Activated naive CD4-positive, alpha-beta T cell treated with anti-CD3 and anti-CD28 coated beads for 36 hours (primary cell): ENCODE measurements at regions of chr13 and their contacts with region 1.

Region 1: DNA sequence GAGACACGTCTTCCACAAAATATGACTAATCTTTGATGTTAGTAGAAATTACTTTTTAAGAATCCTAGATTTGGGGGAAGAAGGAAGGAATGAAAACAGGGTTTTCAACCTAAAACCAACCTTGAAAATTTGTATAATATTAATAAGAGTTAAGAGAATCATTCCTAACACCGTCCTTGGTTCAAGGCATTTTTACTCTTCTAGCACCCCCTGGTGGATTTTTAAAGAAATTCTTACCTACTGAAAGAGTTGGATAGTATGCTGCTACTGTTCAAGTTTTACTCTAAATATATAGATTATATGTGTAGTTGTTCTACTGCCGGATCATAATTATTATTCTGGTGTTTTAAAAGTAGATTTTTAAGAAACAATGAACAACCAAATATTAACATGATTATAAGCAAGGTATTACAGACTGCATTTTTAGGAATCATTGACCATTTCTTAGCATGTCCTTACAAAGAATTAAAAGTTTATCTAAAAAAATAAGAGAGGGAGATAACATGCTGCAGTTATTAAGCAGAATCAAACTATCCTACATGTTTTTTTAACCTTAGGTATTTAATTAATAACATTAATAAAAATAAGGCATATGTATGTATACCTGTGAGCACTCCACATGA is 7.4 kb upstream of the SLITRK6 start:
- DNase-seq: no peak
- H3K4me3 Mint-ChIP-seq: no peak overlapping the region
- H3K27ac Mint-ChIP-seq: no peak overlapping the region
- H3K4me1 Mint-ChIP-seq: no peaks in the 10 kb centered on the region
- H3K27me3 Mint-ChIP-seq: no peaks in the 10 kb centered on the region

Region 2: GRCh38 chr13:84844473-84844872 is 962.2 kb before region 1 on chr13:
- CTCF ChIA-PET with region 1: no interaction called
- intact Hi-C with region 1: loop called (anchors 2 kb)
- DNase-seq: no peak
- H3K4me3 Mint-ChIP-seq: no peak overlapping the region
- H3K27ac Mint-ChIP-seq: no peak overlapping the region
- H3K4me1 Mint-ChIP-seq: no peaks in the 10 kb centered on the region
- H3K27me3 Mint-ChIP-seq: no peaks in the 10 kb centered on the region

Region 3: DNA sequence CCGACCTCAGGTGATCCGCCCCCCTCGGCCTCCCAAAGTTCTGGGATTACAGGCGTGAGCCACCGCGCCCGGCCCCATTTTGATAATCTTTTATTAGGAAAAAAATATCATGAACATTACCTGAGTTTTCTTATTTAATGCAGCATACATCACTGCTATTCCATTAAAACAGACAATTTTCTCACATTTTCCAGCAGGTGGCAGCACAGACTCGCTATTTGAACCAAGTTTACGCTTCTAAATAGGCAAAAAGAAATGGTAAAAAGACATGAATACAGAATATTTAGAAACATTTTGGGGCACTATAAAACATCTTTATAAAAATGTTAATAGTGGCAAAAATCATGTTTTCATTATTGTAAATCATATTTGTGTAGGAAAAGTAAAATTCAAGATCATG is 910.5 kb before region 1 on chr13:
- CTCF ChIA-PET with region 1: no interaction called
- intact Hi-C with region 1: loop called (anchors 1 kb)
- DNase-seq: peak; percentile 63
- H3K4me3 Mint-ChIP-seq: no peak overlapping the region
- H3K27ac Mint-ChIP-seq: no peak overlapping the region
- H3K4me1 Mint-ChIP-seq: no peaks in the 10 kb centered on the region
- H3K27me3 Mint-ChIP-seq: no peaks in the 10 kb centered on the region

Region 4: GRCh38 chr13:84917252-84917878 is 889.3 kb before region 1 on chr13:
- CTCF ChIA-PET with region 1: no interaction called
- intact Hi-C with region 1: loop called (anchors 1 kb)
- DNase-seq: no peak
- H3K4me3 Mint-ChIP-seq: no peak overlapping the region
- H3K27ac Mint-ChIP-seq: no peak overlapping the region
- H3K4me1 Mint-ChIP-seq: no peaks in the 10 kb centered on the region
- H3K27me3 Mint-ChIP-seq: no peaks in the 10 kb centered on the region

Region 5: GRCh38 chr13:85462792-85463425 is 343.8 kb before region 1 on chr13:
- CTCF ChIA-PET with region 1: no interaction called
- intact Hi-C with region 1: no loop called
- DNase-seq: no peak
- H3K4me3 Mint-ChIP-seq: no peak overlapping the region
- H3K27ac Mint-ChIP-seq: no peak overlapping the region
- H3K4me1 Mint-ChIP-seq: no peaks in the 10 kb centered on the region
- H3K27me3 Mint-ChIP-seq: no peaks in the 10 kb centered on the region

Region 6: DNA sequence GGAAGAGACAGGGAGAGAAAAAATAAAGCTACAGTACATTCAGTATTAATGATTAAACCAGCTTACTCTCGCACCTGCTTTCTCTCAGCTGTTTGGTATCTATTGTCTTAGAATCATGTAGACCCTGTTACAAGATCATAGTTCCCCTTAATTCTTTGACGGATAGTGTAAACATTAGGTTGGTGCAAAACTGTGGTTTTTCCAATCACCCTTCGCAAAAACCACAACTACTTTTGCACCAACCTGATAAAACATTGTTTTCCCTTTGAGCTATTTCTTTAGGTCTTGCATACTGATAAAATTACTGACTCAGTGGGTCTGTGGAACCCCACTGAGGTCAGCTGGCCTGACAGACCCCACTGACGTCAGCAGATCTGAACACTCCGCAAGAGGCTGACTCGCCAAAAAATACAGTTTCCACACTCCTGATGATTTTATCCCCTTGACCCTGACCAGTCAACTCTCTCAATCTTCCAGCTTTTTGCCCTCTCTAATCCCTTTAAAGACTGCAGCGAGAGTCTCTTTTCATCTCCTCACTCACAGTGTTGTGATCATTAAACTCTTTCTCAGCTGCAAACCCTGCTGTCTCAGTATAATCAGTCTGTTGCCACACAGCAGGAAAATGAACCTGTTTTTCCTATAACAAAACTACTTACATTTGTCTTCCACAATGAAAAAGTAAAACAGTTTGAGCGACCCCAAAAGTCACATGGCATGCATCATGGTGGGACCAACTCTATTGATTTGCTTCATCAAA is 131.3 kb before region 1 on chr13:
- CTCF ChIA-PET with region 1: no interaction called
- intact Hi-C with region 1: no loop called
- DNase-seq: no peak
- H3K4me3 Mint-ChIP-seq: no peak overlapping the region
- H3K27ac Mint-ChIP-seq: no peak overlapping the region
- H3K4me1 Mint-ChIP-seq: no peaks in the 10 kb centered on the region
- H3K27me3 Mint-ChIP-seq: no peaks in the 10 kb centered on the region

Region 7: DNA sequence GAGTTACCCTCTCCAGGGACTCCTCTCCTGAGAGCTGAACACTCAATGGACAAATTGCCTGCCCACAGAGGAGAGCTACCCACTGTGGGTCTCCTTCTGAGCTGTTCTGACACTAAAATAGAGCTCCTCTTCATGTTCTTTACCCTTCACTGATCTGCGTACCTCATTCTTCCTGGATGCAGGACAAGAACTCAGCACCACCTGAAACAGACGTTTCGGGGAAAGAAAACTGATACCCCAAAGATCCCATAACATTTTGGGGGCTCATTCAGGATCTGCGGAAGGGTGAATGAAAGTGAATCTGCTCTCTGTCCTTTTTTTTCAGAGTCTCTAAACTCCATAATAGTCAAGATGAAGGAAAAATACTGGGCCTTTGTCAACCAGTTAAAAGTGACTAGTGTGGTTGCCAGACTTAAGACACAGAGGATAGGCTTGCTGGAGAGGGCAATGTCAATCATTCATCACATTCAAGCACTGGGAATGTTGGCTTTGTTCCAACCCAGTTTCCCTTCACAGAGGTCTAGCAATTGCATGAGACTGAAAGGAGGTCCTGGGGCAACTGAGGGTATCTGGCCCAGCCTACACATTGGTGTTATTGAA is 129.3 kb after region 1 on chr13:
- CTCF ChIA-PET with region 1: no interaction called
- intact Hi-C with region 1: no loop called
- DNase-seq: no peak
- H3K4me3 Mint-ChIP-seq: no peak overlapping the region
- H3K27ac Mint-ChIP-seq: no peak overlapping the region
- H3K4me1 Mint-ChIP-seq: no peaks in the 10 kb centered on the region
- H3K27me3 Mint-ChIP-seq: no peaks in the 10 kb centered on the region